ENCODE measurements at regions of chr19 and their contacts with region 1.

Region 1: GRCh38 chr19:10580979-10581631 is 6.0 kb downstream of the AP1M2 start:
- DNase-seq: peak; percentile 83 to 89 (median 87)
- ATAC-seq: peak; percentile 76 to 93 (median 90)
- H3K4me3 ChIP-seq: peak overlapping the region in 4 of 12 donors; percentile 8 to 35 (median 12)
- H3K27ac ChIP-seq: no peak overlapping the region
- H3K4me1 ChIP-seq: peaks cover 0 to 6% (median 3%) of the 10 kb centered on the region in 12 donors
- H3K27me3 ChIP-seq: no peaks in the 10 kb centered on the region
- CTCF ChIP-seq: peak; percentile 94 to 99 (median 98)
- POLR2A ChIP-seq: no peak

Region 2: DNA sequence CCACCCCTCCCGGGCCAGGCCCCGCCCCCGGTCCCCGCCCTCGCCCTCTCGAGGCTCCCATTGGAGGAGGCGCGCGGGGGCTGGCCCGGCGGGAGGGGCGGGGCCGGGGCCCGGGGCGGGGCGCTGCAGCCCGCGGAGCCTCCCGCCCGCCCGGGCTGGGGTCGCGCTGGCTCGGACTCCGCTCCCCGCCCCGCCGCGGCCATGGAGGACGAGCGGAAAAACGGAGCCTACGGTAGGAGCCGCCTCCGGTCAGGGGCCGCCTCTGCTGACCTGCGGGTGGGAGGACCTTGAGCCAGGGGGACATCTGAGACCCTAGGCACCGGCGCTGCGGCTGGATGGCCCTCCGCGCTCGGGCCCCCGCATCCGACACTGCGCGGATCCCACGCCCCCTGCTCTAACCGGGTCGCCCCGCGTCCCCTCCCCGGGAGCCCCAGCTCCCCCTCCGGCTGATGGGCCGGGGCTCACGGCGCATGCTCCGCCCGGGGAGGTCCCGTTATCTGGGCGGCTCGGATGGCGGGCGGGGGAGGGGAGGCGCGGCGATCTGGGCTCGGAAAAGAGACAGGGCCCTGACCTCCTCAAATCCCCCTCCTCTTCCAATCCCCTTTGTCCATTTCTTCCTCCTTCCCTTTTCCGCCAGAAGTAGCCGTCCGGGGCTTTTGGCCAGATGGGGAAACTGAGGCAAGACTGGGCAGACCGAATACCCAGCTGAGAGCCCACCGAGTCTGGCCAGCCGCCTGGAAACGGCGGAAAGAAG is 21.4 kb after region 1 on chr19:
- intact Hi-C with region 1: no loop called
- DNase-seq: peak; percentile 87 to 93 (median 89)
- ATAC-seq: peak; percentile 87 to 99 (median 96)
- H3K4me3 ChIP-seq: peak overlapping the region; percentile 88 to 100 (median 100)
- H3K27ac ChIP-seq: peak overlapping the region; percentile 91 to 99 (median 97)
- H3K4me1 ChIP-seq: peaks cover 0 to 36% (median 22%) of the 10 kb centered on the region in 12 donors
- H3K27me3 ChIP-seq: no peaks in the 10 kb centered on the region
- CTCF ChIP-seq: no peak
- POLR2A ChIP-seq: peak in 1 of 2 donors; percentile 75

Region 3: GRCh38 chr19:10644260-10645007 is 63.3 kb after region 1 on chr19:
- intact Hi-C with region 1: loop called (anchors 1 to 2 kb)
- DNase-seq: peak; percentile 81 to 91 (median 88)
- ATAC-seq: peak; percentile 77 to 93 (median 90)
- H3K4me3 ChIP-seq: no peak overlapping the region
- H3K27ac ChIP-seq: peak overlapping the region; percentile 17 to 79 (median 54)
- H3K4me1 ChIP-seq: peaks cover 0 to 45% (median 19%) of the 10 kb centered on the region in 12 donors
- H3K27me3 ChIP-seq: no peaks in the 10 kb centered on the region
- CTCF ChIP-seq: peak; percentile 84 to 92 (median 90)
- POLR2A ChIP-seq: no peak

Region 4: DNA sequence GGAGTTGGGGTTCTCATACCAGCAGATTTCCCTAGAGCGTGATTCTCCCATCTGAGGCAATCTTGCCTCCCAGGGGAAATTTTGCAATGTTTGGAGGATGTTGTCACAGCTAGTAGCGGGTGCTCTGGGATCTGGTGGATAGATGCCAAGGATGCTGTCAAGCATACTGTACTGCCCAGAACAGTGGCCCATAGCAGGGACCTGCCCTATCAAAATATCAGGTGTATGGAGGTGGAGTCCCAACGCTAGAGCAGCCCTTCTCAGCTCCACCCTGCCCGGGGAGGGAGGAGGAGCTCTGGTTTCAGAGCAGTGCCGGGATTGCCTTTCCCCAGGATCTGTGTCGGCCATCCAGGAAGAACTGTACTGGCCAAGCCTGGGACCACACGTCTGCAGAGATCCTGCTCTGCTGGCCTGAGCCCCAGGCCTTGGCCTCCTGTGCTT is 109.3 kb after region 1 on chr19:
- intact Hi-C with region 1: loop called in 5 of 10 experiments (anchors 5 kb)
- DNase-seq: no peak
- ATAC-seq: no peak
- H3K4me3 ChIP-seq: no peak overlapping the region
- H3K27ac ChIP-seq: no peak overlapping the region
- H3K4me1 ChIP-seq: peaks cover 3 to 31% (median 17%) of the 10 kb centered on the region in 12 donors
- H3K27me3 ChIP-seq: no peaks in the 10 kb centered on the region
- CTCF ChIP-seq: no peak
- POLR2A ChIP-seq: no peak

Region 5: DNA sequence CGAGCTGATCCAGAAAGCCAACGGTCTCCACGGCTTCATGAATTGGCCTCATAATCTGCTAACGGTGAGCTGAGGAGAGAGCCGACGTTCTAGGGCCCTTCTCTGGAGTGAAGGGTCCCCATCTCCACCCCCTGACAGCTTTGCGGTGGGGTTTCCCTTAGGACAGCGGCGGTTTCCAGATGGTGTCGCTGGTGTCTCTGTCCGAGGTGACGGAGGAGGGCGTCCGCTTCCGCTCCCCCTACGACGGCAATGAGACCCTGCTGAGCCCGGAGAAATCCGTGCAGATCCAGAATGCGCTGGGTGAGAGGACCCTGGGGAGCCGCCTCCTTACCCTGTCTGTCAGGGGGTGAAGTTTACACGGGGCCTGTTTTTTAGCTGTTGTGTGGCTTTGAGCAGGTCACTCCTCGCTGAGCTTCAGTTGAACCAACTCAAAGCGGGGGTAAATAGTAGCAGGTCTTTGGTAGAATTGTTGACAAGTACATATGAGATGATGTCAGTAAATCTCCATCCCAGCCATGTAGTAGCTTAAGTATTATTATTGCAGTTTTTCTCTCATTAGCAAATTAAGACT is 120.9 kb after region 1 on chr19:
- intact Hi-C with region 1: loop called in 7 of 10 experiments (anchors 1 to 5 kb)
- DNase-seq: no peak
- ATAC-seq: peak; percentile 20 to 63 (median 48)
- H3K4me3 ChIP-seq: peak overlapping the region; percentile 56 to 97 (median 77)
- H3K27ac ChIP-seq: peak overlapping the region in 9 of 12 donors; percentile 6 to 79 (median 68)
- H3K4me1 ChIP-seq: peaks cover 0 to 15% (median 10%) of the 10 kb centered on the region in 12 donors
- H3K27me3 ChIP-seq: no peaks in the 10 kb centered on the region
- CTCF ChIP-seq: no peak
- POLR2A ChIP-seq: no peak